Calu3 (cell line): ENCODE measurements at regions of chr6 and their contacts with region 1.

Region 1: DNA sequence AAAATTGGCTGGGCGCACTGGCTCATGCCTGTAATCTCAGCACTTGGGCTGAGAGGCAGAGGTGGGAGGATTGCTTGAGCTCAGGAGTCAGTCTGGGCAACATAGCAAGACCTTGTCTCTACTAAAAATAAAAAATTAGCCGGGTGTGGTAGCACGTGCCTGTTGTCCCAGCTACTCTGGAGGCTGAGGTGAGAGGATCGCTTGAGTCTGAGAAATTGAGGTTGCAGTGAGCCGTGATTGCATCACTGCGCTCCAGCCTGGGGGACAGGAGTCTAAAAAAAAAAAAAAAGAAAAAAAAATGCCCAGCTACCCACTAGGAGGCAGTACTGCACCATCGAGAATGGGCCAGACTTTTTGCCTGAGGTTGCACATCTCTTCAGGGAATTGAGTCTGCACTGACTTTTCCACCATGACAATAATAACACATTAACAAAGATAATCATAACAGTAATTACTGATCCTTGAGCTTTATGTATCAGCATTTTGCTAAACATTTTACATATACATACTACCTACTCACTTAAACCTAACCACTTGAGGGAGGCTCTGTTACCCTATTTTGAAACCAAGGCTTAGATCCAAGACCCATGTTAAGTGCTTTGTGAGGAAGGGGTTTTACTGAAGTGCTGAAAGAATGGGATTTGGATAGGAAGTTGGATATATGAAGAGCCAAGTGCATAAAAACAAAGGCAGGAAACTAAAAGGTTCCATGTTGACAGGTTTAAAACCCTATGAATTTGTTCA is 21.0 kb downstream of the SRSF3 start:
- DNase-seq: peak; percentile 65
- H3K4me3 Mint-ChIP-seq: peak overlapping the region; percentile 14
- H3K27ac Mint-ChIP-seq: peak overlapping the region; percentile 72
- H3K4me1 Mint-ChIP-seq: peaks cover 19% of the 10 kb centered on the region
- H3K27me3 Mint-ChIP-seq: no peaks in the 10 kb centered on the region
- CTCF ChIP-seq: peak; percentile 86

Region 2: DNA sequence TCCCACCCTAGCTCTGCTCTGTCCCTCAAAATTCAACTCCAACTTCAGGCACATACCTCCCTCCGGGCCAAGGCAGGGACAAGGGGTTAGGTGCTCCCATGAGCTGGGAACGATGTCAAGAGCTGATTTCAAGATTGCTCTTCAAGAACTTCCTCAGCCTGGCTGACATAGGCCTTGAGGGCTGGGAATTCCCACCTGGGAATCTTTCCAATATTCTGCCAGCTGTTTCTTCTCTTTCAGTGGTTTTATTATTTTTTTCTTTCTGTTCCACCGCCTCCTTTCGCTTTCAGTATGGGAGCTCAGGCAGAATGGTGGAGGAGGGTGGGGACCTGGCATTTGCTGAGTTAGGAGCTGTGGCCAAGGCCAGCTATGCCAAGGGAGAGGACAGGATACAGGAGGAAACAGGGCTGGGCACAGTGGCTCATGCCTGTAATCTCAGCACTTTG is 12.6 kb after region 1 on chr6:
- CTCF ChIA-PET with region 1: no interaction called
- intact Hi-C with region 1: no loop called
- DNase-seq: no peak
- H3K4me3 Mint-ChIP-seq: no peak overlapping the region
- H3K27ac Mint-ChIP-seq: no peak overlapping the region
- H3K4me1 Mint-ChIP-seq: peaks cover 29% of the 10 kb centered on the region
- H3K27me3 Mint-ChIP-seq: no peaks in the 10 kb centered on the region
- CTCF ChIP-seq: no peak

Region 3: GRCh38 chr6:36678518-36679027 is 63.4 kb after region 1 on chr6 and contains the start of gene CDKN1A:
- CTCF ChIA-PET with region 1: interaction called, 4 read pairs
- intact Hi-C with region 1: loop called (anchors 2 kb)
- DNase-seq: peak; percentile 96
- H3K4me3 Mint-ChIP-seq: peak within 1 kb of the TSS; percentile 99
- H3K27ac Mint-ChIP-seq: peak within 1 kb of the TSS; percentile 85
- H3K4me1 Mint-ChIP-seq: peaks cover 65% of the 10 kb centered on the region
- H3K27me3 Mint-ChIP-seq: no peaks in the 10 kb centered on the region
- CTCF ChIP-seq: no peak
- total RNA-seq, gene CDKN1A: 26.5 and 33.7 TPM in 2 replicates

Region 4: DNA sequence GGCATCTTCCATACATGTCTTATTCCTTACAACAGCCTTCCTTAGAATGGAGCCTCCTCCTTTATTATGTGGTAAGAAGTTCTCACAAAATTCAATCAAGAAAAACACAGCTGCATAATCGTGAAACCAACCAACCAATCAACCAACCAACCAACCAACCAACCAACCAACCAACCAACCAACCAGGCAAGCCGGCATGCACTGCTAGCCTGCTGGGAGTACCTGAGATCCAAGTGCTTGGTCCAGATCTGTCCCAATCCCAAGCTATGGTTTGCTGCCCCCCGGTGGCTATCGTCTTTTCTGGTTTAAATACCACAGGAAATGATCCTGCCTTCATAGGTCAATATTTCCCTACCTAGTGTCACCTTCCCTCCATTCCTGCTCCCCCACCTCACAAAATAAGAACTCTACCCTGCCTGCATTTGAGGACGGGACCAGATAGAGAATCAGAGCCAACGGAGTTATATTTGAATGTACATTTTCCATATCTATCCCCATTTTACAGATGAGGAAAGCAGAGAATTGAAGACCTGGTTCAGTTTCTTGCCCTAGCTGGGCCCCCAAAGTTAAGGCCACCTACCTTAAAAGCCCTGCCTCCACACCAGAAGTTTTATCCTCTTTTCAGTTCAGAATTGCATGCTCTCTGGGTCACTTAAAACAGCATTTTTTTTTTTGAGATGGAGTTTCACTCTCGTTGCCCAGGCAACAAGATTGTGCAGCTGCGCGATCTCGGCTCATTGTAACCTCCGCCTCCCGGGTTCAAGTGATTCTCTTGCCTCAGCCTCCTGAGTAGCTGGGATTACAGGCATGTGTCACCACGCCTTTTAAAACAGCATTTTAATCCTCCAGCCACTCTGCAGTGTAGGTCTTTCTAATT is 109.6 kb after region 1 on chr6:
- CTCF ChIA-PET with region 1: interaction called, 18 read pairs
- intact Hi-C with region 1: no loop called
- DNase-seq: peak; percentile 89
- H3K4me3 Mint-ChIP-seq: no peak overlapping the region
- H3K27ac Mint-ChIP-seq: no peak overlapping the region
- H3K4me1 Mint-ChIP-seq: peaks cover 11% of the 10 kb centered on the region
- H3K27me3 Mint-ChIP-seq: no peaks in the 10 kb centered on the region
- CTCF ChIP-seq: peak; percentile 53

Region 5: GRCh38 chr6:36759148-36759759 is 144.1 kb after region 1 on chr6:
- CTCF ChIA-PET with region 1: interaction called, 9 read pairs
- intact Hi-C with region 1: loop called (anchors 2 kb)
- DNase-seq: peak; percentile 94
- H3K4me3 Mint-ChIP-seq: no peak overlapping the region
- H3K27ac Mint-ChIP-seq: no peak overlapping the region
- H3K4me1 Mint-ChIP-seq: peaks cover 49% of the 10 kb centered on the region
- H3K27me3 Mint-ChIP-seq: no peaks in the 10 kb centered on the region
- CTCF ChIP-seq: peak; percentile 94

Region 6: DNA sequence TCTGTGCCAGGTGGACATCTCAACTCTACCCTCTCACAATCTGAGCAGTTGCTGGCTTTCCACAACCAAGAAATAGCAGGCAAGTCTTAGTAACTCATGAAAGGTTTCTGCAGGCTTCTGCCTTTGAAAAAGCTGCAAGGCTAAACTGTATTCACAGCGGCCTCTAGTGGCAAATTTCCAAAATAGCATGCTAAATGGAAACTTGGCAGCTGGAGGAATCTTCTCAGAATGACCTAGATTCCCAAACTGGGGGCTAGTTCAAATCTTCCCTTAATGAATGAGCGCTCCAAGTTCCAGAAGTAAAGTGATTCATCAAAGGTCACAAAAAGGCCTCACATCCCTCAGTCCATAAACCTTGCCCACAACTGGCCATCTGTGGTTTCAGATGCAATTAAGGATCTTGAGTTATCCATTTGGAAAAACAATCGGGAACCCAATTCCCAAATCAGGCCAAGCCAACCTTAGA is 236.0 kb after region 1 on chr6:
- CTCF ChIA-PET with region 1: no interaction called
- intact Hi-C with region 1: loop called (anchors 5 kb)
- DNase-seq: peak; percentile 49
- H3K4me3 Mint-ChIP-seq: no peak overlapping the region
- H3K27ac Mint-ChIP-seq: no peak overlapping the region
- H3K4me1 Mint-ChIP-seq: peaks cover 41% of the 10 kb centered on the region
- H3K27me3 Mint-ChIP-seq: peaks cover 3% of the 10 kb centered on the region
- CTCF ChIP-seq: peak; percentile 46